ENCODE measurements at regions of chr19 and their contacts with region 1.

Region 1: GRCh38 chr19:31356587-31357314 is 7.5 kb upstream of the TSHZ3 start:
- DNase-seq: peak in 4 of 9 donors; percentile 32 to 79 (median 48)
- ATAC-seq: peak; percentile 88
- H3K4me3 ChIP-seq: no peak overlapping the region
- H3K4me3 Mint-ChIP-seq: peak overlapping the region in 5 of 10 donors; percentile 7 to 63 (median 18)
- H3K27ac ChIP-seq: no peak overlapping the region
- H3K27ac Mint-ChIP-seq: peak overlapping the region in 1 of 9 donors; percentile 31
- H3K4me1 ChIP-seq: peaks cover 15 to 24% of the 10 kb centered on the region in 2 donors
- H3K4me1 Mint-ChIP-seq: peaks cover 24 to 49% (median 33%) of the 10 kb centered on the region in 7 donors
- H3K27me3 ChIP-seq: peaks cover 17 to 42% of the 10 kb centered on the region in 2 donors
- H3K27me3 Mint-ChIP-seq: peaks cover 65 to 90% (median 84%) of the 10 kb centered on the region in 5 donors

Region 2: GRCh38 chr19:30227661-30228428 is 1128.9 kb before region 1 on chr19:
- CTCF ChIA-PET with region 1: no interaction called
- POLR2A ChIA-PET with region 1: no interaction called
- intact Hi-C with region 1: loop called in 1 of 2 experiments (anchors 5 kb)
- DNase-seq: peak in 2 of 9 donors; percentile 10 to 70
- ATAC-seq: peak; percentile 10
- H3K4me3 ChIP-seq: no peak overlapping the region
- H3K4me3 Mint-ChIP-seq: peak overlapping the region in 9 of 10 donors; percentile 45 to 92 (median 82)
- H3K27ac ChIP-seq: no peak overlapping the region
- H3K27ac Mint-ChIP-seq: peak overlapping the region in 1 of 9 donors; percentile 23
- H3K4me1 ChIP-seq: peaks cover 4 to 6% of the 10 kb centered on the region in 2 donors
- H3K4me1 Mint-ChIP-seq: peaks cover 19 to 42% (median 33%) of the 10 kb centered on the region in 7 donors
- H3K27me3 ChIP-seq: peaks cover 0 to 14% of the 10 kb centered on the region in 2 donors
- H3K27me3 Mint-ChIP-seq: peaks cover 61 to 83% (median 74%) of the 10 kb centered on the region in 5 donors

Region 3: DNA sequence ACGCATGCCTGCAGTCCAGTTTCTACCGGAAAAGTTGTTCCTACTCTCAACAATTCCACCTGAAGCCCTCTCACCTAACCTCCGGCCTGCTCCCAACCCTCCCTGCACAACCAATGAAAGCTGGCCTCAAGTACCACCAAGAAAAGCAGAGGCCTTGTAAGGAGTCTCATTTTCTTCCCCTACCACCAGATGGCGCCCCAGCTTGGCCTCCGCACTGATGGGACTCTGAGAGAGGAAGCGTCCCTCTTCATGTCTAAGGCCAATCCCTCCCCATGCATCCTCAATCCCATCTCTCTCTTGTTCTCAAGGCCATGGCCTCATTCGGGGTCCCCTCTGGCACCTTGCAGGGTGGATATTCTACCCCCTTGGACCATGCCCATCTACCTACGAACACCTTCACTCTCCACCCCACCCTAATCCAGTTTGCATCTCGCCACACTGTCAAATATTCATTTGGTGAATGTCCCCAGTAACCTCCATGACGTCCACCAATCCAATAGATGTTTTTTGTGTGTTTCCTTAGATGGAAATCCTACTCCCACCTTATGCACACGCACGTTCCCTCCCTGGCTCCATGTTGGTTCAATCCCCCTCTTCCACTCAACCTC is 571.8 kb before region 1 on chr19:
- CTCF ChIA-PET with region 1: interaction called, 5 read pairs
- POLR2A ChIA-PET with region 1: no interaction called
- intact Hi-C with region 1: loop called in 1 of 2 experiments (anchors 2 kb)
- DNase-seq: peak; percentile 15 to 61 (median 37)
- ATAC-seq: peak; percentile 69
- H3K4me3 ChIP-seq: no peak overlapping the region
- H3K4me3 Mint-ChIP-seq: no peak overlapping the region
- H3K27ac ChIP-seq: no peak overlapping the region
- H3K27ac Mint-ChIP-seq: no peak overlapping the region
- H3K4me1 ChIP-seq: no peaks in the 10 kb centered on the region
- H3K4me1 Mint-ChIP-seq: peaks cover 0 to 3% (median 0%) of the 10 kb centered on the region in 7 donors
- H3K27me3 ChIP-seq: no peaks in the 10 kb centered on the region
- H3K27me3 Mint-ChIP-seq: peaks cover 0 to 34% (median 10%) of the 10 kb centered on the region in 5 donors

Region 4: DNA sequence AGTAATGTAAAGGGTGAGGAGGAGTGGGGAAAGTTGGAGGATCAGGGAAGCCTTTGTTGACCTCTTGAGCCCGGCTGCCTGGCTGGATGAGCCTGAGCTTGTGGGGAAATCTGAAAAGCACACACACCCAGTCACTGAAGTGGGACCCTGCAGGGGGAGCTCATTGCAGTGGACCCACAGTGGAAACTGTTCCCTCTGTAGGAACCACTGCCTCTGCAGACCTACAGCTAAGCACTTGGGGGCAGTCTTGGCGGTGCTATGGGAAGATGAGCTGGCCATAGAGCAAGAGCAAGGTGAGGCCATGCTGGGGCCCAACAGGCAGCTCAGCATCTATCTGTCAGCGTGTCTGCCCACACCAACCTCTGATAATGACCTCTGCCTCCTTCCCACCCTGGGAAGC is 302.3 kb before region 1 on chr19:
- CTCF ChIA-PET with region 1: no interaction called
- POLR2A ChIA-PET with region 1: no interaction called
- intact Hi-C with region 1: loop called in 1 of 2 experiments (anchors 1 kb)
- DNase-seq: peak in 1 of 9 donors; percentile 25
- ATAC-seq: peak; percentile 68
- H3K4me3 ChIP-seq: no peak overlapping the region
- H3K4me3 Mint-ChIP-seq: no peak overlapping the region
- H3K27ac ChIP-seq: no peak overlapping the region
- H3K27ac Mint-ChIP-seq: no peak overlapping the region
- H3K4me1 ChIP-seq: no peaks in the 10 kb centered on the region
- H3K4me1 Mint-ChIP-seq: no peaks in the 10 kb centered on the region
- H3K27me3 ChIP-seq: no peaks in the 10 kb centered on the region
- H3K27me3 Mint-ChIP-seq: peaks cover 0 to 47% (median 23%) of the 10 kb centered on the region in 5 donors

Region 5: GRCh38 chr19:31110331-31110730 is 246.4 kb before region 1 on chr19:
- CTCF ChIA-PET with region 1: no interaction called
- POLR2A ChIA-PET with region 1: no interaction called
- intact Hi-C with region 1: loop called in 1 of 2 experiments (anchors 1 kb)
- DNase-seq: no peak
- ATAC-seq: no peak
- H3K4me3 ChIP-seq: no peak overlapping the region
- H3K4me3 Mint-ChIP-seq: no peak overlapping the region
- H3K27ac ChIP-seq: no peak overlapping the region
- H3K27ac Mint-ChIP-seq: no peak overlapping the region
- H3K4me1 ChIP-seq: no peaks in the 10 kb centered on the region
- H3K4me1 Mint-ChIP-seq: peaks cover 5 to 12% (median 9%) of the 10 kb centered on the region in 7 donors
- H3K27me3 ChIP-seq: no peaks in the 10 kb centered on the region
- H3K27me3 Mint-ChIP-seq: peaks cover 15 to 52% (median 29%) of the 10 kb centered on the region in 5 donors

Measured in naive thymus-derived CD4-positive, alpha-beta T cell (primary cell).